Activated B cell treated with CpG ODN at 0.5 μM for 24 hours (primary cell): ENCODE measurements at regions of chr1 and their contacts with region 1.

Region 1: GRCh38 chr1:202926720-202927491 is at the start of gene KLHL12:
- DNase-seq: peak; percentile 92
- ATAC-seq: peak; percentile 93
- H3K4me3 Mint-ChIP-seq: peak within 1 kb of the TSS; percentile 94
- H3K27ac Mint-ChIP-seq: peak within 1 kb of the TSS; percentile 92
- H3K4me1 Mint-ChIP-seq: peaks cover 24% of the 10 kb centered on the region
- H3K27me3 Mint-ChIP-seq: no peaks in the 10 kb centered on the region
- CTCF ChIP-seq: no peak
- total RNA-seq, gene KLHL12: 30.4 and 30.8 TPM in 2 replicates

Region 2: GRCh38 chr1:201917362-201918033 is 1009.4 kb before region 1 on chr1:
- CTCF ChIA-PET with region 1: no interaction called
- POLR2A ChIA-PET with region 1: no interaction called
- intact Hi-C with region 1: no loop called
- DNase-seq: no peak
- ATAC-seq: no peak
- H3K4me3 Mint-ChIP-seq: no peak overlapping the region
- H3K27ac Mint-ChIP-seq: no peak overlapping the region
- H3K4me1 Mint-ChIP-seq: no peaks in the 10 kb centered on the region
- H3K27me3 Mint-ChIP-seq: peaks cover 17% of the 10 kb centered on the region
- CTCF ChIP-seq: no peak

Region 3: GRCh38 chr1:202837039-202837438 is 89.9 kb before region 1 on chr1:
- CTCF ChIA-PET with region 1: no interaction called
- POLR2A ChIA-PET with region 1: interaction called, 11 read pairs
- intact Hi-C with region 1: no loop called
- DNase-seq: no peak
- ATAC-seq: no peak
- H3K4me3 Mint-ChIP-seq: no peak overlapping the region
- H3K27ac Mint-ChIP-seq: no peak overlapping the region
- H3K4me1 Mint-ChIP-seq: peaks cover 16% of the 10 kb centered on the region
- H3K27me3 Mint-ChIP-seq: peaks cover 4% of the 10 kb centered on the region
- CTCF ChIP-seq: no peak

Region 4: DNA sequence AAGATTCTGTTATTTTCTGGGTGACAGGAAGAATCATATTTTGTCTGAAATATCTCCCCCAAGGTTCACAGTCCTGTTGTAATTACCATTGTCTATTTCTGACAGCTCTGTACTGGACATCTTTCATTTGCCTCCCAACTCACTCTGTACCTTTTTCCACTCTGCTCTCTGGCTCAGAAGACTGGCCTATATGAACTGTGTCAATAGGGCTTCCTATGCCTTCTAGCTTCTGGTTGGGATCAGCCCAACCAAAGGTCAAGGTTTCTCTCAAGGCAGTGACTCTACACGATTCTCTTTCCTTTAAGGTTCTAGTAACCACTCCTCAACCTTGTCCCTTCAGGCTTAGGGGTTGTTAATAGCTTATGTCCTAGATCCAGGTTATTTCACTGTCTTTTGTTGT is 17.4 kb before region 1 on chr1:
- CTCF ChIA-PET with region 1: no interaction called
- POLR2A ChIA-PET with region 1: no interaction called
- intact Hi-C with region 1: no loop called
- DNase-seq: no peak
- ATAC-seq: no peak
- H3K4me3 Mint-ChIP-seq: no peak overlapping the region
- H3K27ac Mint-ChIP-seq: no peak overlapping the region
- H3K4me1 Mint-ChIP-seq: no peaks in the 10 kb centered on the region
- H3K27me3 Mint-ChIP-seq: no peaks in the 10 kb centered on the region
- CTCF ChIP-seq: no peak

Region 5: GRCh38 chr1:202957733-202958543 is 31.0 kb after region 1 on chr1 and contains the start of gene ADIPOR1:
- CTCF ChIA-PET with region 1: no interaction called
- POLR2A ChIA-PET with region 1: interaction called, 8 read pairs
- intact Hi-C with region 1: loop called (anchors 1 kb)
- DNase-seq: peak; percentile 92
- ATAC-seq: peak; percentile 99
- H3K4me3 Mint-ChIP-seq: peak within 1 kb of the TSS; percentile 90
- H3K27ac Mint-ChIP-seq: peak within 1 kb of the TSS; percentile 86
- H3K4me1 Mint-ChIP-seq: peaks cover 34% of the 10 kb centered on the region
- H3K27me3 Mint-ChIP-seq: no peaks in the 10 kb centered on the region
- CTCF ChIP-seq: no peak
- total RNA-seq, gene ADIPOR1: 44.4 and 45.0 TPM in 2 replicates

Region 6: GRCh38 chr1:203153989-203154821 is 227.3 kb after region 1 on chr1:
- CTCF ChIA-PET with region 1: no interaction called
- POLR2A ChIA-PET with region 1: no interaction called
- intact Hi-C with region 1: no loop called
- DNase-seq: no peak
- ATAC-seq: no peak
- H3K4me3 Mint-ChIP-seq: no peak overlapping the region
- H3K27ac Mint-ChIP-seq: no peak overlapping the region
- H3K4me1 Mint-ChIP-seq: no peaks in the 10 kb centered on the region
- H3K27me3 Mint-ChIP-seq: peaks cover 6% of the 10 kb centered on the region
- CTCF ChIP-seq: no peak

Region 7: DNA sequence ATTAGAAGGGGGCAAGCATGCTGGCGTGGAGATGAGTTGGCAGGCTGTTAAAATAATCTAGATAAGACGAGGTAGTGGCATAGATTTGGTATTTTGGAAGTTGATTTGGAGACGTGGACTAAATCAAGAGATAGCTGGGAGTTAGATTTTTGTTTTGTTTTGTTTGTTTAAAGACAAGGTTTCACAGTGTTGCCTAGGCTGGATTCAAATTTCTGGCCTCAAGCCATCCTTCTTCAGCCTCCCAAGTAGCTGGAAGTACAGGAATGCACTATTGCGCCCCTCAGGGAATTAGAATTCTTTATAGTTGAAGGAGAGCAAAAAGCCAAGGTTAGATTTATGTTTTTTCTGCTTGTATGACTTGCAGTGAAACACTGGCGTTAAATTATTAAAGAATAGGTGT is 912.2 kb after region 1 on chr1:
- CTCF ChIA-PET with region 1: no interaction called
- POLR2A ChIA-PET with region 1: no interaction called
- intact Hi-C with region 1: no loop called
- DNase-seq: no peak
- ATAC-seq: no peak
- H3K4me3 Mint-ChIP-seq: no peak overlapping the region
- H3K27ac Mint-ChIP-seq: no peak overlapping the region
- H3K4me1 Mint-ChIP-seq: no peaks in the 10 kb centered on the region
- H3K27me3 Mint-ChIP-seq: no peaks in the 10 kb centered on the region
- CTCF ChIP-seq: no peak